MCF 10A (cell line): ENCODE measurements at regions of chr10 and their contacts with region 1.

Region 1: GRCh38 chr10:119750391-119751230 is 24.8 kb downstream of the INPP5F start:
- DNase-seq: peak; percentile 84
- H3K4me3 Mint-ChIP-seq: no peak overlapping the region
- H3K27ac Mint-ChIP-seq: no peak overlapping the region
- H3K4me1 Mint-ChIP-seq: peaks cover 11% of the 10 kb centered on the region
- H3K27me3 Mint-ChIP-seq: no peaks in the 10 kb centered on the region
- CTCF ChIP-seq: peak; percentile 91

Region 2: DNA sequence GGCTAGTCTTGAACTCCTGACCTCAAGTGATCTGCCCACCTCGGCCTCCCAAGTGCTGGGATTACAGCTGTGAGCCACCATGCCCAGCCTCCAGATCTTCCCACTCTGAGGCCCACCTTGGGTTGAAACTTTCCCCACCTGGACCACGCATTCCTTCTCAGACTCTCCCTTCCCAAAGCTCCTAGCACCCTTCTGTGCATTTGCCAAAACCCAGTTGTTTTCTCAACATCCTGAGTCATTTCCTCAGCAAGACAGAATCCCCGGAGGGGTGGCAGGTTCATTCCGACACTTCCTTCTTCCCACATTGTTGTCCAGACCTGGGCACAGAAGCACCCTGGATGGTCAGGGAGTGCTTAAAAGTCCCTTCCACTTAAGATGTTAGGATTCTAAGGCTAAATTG is 70.6 kb before region 1 on chr10:
- CTCF ChIA-PET with region 1: interaction called, 24 read pairs
- POLR2A ChIA-PET with region 1: interaction called, 7 read pairs
- intact Hi-C with region 1: no loop called
- DNase-seq: peak; percentile 99
- H3K4me3 Mint-ChIP-seq: peak overlapping the region; percentile 72
- H3K27ac Mint-ChIP-seq: peak overlapping the region; percentile 92
- H3K4me1 Mint-ChIP-seq: peaks cover 28% of the 10 kb centered on the region
- H3K27me3 Mint-ChIP-seq: no peaks in the 10 kb centered on the region
- CTCF ChIP-seq: no peak

Region 3: GRCh38 chr10:119737827-119738226 is 12.8 kb before region 1 on chr10:
- CTCF ChIA-PET with region 1: interaction called, 32 read pairs
- POLR2A ChIA-PET with region 1: interaction called, 5 read pairs
- intact Hi-C with region 1: no loop called
- DNase-seq: peak; percentile 81
- H3K4me3 Mint-ChIP-seq: peak overlapping the region; percentile 68
- H3K27ac Mint-ChIP-seq: peak overlapping the region; percentile 86
- H3K4me1 Mint-ChIP-seq: peaks cover 18% of the 10 kb centered on the region
- H3K27me3 Mint-ChIP-seq: no peaks in the 10 kb centered on the region
- CTCF ChIP-seq: no peak

Region 4: GRCh38 chr10:119784340-119785070 is 33.9 kb after region 1 on chr10:
- CTCF ChIA-PET with region 1: interaction called, 11 read pairs
- POLR2A ChIA-PET with region 1: no interaction called
- intact Hi-C with region 1: no loop called
- DNase-seq: no peak
- H3K4me3 Mint-ChIP-seq: no peak overlapping the region
- H3K27ac Mint-ChIP-seq: no peak overlapping the region
- H3K4me1 Mint-ChIP-seq: no peaks in the 10 kb centered on the region
- H3K27me3 Mint-ChIP-seq: no peaks in the 10 kb centered on the region
- CTCF ChIP-seq: no peak

Region 5: GRCh38 chr10:119859420-119860258 is 109.0 kb after region 1 on chr10:
- CTCF ChIA-PET with region 1: interaction called, 88 read pairs
- POLR2A ChIA-PET with region 1: interaction called, 14 read pairs
- intact Hi-C with region 1: loop called (anchors 1 kb)
- DNase-seq: peak; percentile 63
- H3K4me3 Mint-ChIP-seq: no peak overlapping the region
- H3K27ac Mint-ChIP-seq: peak overlapping the region; percentile 35
- H3K4me1 Mint-ChIP-seq: peaks cover 23% of the 10 kb centered on the region
- H3K27me3 Mint-ChIP-seq: no peaks in the 10 kb centered on the region
- CTCF ChIP-seq: peak; percentile 38

Region 6: GRCh38 chr10:119969609-119970008 is 219.0 kb after region 1 on chr10:
- CTCF ChIA-PET with region 1: no interaction called
- POLR2A ChIA-PET with region 1: no interaction called
- intact Hi-C with region 1: no loop called
- DNase-seq: no peak
- H3K4me3 Mint-ChIP-seq: no peak overlapping the region
- H3K27ac Mint-ChIP-seq: no peak overlapping the region
- H3K4me1 Mint-ChIP-seq: no peaks in the 10 kb centered on the region
- H3K27me3 Mint-ChIP-seq: no peaks in the 10 kb centered on the region
- CTCF ChIP-seq: no peak

Region 7: GRCh38 chr10:120336911-120337540 is 586.4 kb after region 1 on chr10:
- CTCF ChIA-PET with region 1: no interaction called
- POLR2A ChIA-PET with region 1: no interaction called
- intact Hi-C with region 1: loop called (anchors 2 kb)
- DNase-seq: peak; percentile 66
- H3K4me3 Mint-ChIP-seq: no peak overlapping the region
- H3K27ac Mint-ChIP-seq: no peak overlapping the region
- H3K4me1 Mint-ChIP-seq: no peaks in the 10 kb centered on the region
- H3K27me3 Mint-ChIP-seq: peaks cover 25% of the 10 kb centered on the region
- CTCF ChIP-seq: peak; percentile 64